Testis (tissue), 5 donors: ENCODE measurements at regions of chr9 and their contacts with region 1.

Region 1: DNA sequence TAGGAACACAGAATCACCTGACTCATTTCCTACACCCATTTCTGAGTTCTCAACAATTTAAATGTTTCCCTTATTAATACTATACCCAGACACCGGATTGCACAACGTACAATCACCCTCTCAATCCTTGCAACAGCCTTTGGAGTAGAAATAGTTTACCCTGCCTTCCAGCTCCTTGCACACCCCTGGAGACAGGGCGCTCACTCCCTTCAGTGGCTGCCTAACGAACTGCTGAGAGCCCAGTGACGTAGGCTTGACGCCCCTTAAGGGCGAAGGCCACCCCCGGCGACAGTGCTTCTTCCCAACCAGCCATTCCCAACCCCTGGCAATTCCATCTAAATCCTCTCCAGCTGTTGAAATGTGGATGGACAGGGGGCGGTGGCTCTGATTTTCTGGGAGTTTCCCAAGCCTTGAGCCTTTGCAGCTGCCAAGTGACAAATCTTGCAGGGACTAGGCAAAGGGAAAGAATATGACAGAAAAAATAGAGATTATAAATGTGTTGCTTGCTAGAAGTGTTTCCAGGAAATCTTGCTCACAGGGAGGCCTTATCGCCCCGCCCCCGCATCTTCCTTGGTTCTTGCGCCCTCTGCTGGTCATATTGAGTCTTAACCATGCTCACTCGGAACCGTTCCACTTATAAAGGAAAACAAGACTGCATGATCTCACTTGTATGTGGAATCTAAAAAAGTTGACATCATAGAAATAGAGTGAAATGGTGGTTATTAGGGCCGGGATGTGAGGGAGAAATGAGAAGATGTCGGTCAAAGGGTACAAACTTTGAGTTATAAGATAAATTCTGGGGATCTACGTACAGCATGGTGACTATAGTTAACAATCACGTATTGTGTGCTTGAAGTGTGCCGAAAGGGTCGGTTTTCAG is 7.6 kb upstream of the BARX1 start:
- DNase-seq: peak; percentile 92
- H3K4me3 ChIP-seq: no peak overlapping the region
- H3K27ac ChIP-seq: no peak overlapping the region
- H3K4me1 ChIP-seq: peaks cover 18% of the 10 kb centered on the region
- H3K27me3 ChIP-seq: peaks cover 4% of the 10 kb centered on the region
- CTCF ChIP-seq: peak; percentile 81 to 87 (median 84)
- POLR2A ChIP-seq: no peak

Region 2: DNA sequence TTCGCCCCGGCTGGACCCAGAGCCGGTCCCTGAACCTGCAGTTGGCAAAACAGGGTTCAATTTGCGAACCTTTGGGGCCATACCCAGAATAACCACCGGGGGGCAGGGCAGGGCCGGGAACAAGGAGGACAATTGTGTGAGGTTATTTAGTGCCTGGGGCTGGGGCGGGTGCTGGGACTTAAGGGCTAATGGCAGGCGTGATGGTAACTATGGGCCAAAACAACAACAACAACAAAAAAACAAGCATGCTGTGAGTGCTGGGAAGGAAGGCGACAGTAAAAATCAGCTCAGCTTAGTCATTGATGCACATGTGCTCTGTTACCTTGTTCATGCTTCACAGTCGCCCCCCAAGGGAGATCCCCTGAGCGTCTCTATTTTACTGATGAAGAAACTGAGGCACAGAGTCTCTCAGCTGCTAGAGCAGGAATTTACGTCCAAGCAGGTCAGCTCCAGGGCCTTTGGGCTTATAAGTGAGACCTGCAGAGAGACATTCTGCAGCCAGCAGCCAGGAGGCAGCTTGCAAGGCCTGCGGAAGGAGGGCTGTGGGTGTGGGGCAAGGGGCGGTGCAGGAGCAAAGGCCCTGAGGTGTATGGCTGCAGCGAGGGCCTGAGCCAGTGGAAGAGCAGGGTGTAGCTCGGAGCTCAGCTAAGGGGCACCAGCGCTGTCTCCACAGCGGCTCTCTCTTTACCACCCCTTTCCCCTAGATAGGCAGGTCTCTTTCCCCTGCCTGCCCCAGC is 280.4 kb before region 1 on chr9:
- intact Hi-C with region 1: loop called (anchors 5 kb)
- DNase-seq: peak; percentile 79
- H3K4me3 ChIP-seq: no peak overlapping the region
- H3K27ac ChIP-seq: no peak overlapping the region
- H3K4me1 ChIP-seq: no peaks in the 10 kb centered on the region
- H3K27me3 ChIP-seq: no peaks in the 10 kb centered on the region
- CTCF ChIP-seq: peak; percentile 54 to 79 (median 74)
- POLR2A ChIP-seq: no peak

Region 3: GRCh38 chr9:93702269-93702668 is 260.5 kb before region 1 on chr9:
- intact Hi-C with region 1: no loop called
- DNase-seq: no peak
- H3K4me3 ChIP-seq: no peak overlapping the region
- H3K27ac ChIP-seq: no peak overlapping the region
- H3K4me1 ChIP-seq: no peaks in the 10 kb centered on the region
- H3K27me3 ChIP-seq: no peaks in the 10 kb centered on the region
- CTCF ChIP-seq: no peak
- POLR2A ChIP-seq: no peak

Region 4: GRCh38 chr9:93908591-93909511 is 54.0 kb before region 1 on chr9:
- intact Hi-C with region 1: no loop called
- DNase-seq: no peak
- H3K4me3 ChIP-seq: no peak overlapping the region
- H3K27ac ChIP-seq: no peak overlapping the region
- H3K4me1 ChIP-seq: no peaks in the 10 kb centered on the region
- H3K27me3 ChIP-seq: no peaks in the 10 kb centered on the region
- CTCF ChIP-seq: no peak
- POLR2A ChIP-seq: no peak

Region 5: DNA sequence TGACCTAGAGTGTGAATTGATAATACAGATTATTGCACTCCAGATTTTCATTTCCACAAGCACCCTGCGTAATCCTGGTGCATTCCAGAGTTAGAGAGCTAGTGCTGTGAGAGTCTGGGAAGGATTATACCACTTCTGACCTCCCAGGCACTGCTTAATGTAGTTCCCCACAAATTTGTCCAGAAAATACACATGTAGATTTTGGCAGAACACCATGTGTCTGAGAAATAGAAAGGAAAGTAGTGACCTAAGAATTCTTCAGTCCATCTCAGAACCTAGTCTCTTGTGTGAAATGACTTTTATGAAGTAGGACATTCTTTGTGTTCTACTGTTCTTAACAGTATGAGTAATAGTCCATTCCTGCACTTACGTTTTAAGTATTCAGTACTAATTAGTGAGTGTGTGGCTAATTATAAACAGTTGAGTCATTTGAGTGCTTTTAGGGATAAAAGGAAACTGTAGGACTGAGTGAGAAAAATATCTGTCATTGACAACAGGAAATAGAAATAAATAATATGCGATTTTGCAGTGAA is 93.7 kb after region 1 on chr9:
- intact Hi-C with region 1: no loop called
- DNase-seq: no peak
- H3K4me3 ChIP-seq: no peak overlapping the region
- H3K27ac ChIP-seq: peak overlapping the region in 1 of 2 donors; percentile 17
- H3K4me1 ChIP-seq: no peaks in the 10 kb centered on the region
- H3K27me3 ChIP-seq: no peaks in the 10 kb centered on the region
- CTCF ChIP-seq: no peak
- POLR2A ChIP-seq: no peak